Caco-2 (cell line): ENCODE measurements at regions of chr2 and their contacts with region 1.

Region 1: DNA sequence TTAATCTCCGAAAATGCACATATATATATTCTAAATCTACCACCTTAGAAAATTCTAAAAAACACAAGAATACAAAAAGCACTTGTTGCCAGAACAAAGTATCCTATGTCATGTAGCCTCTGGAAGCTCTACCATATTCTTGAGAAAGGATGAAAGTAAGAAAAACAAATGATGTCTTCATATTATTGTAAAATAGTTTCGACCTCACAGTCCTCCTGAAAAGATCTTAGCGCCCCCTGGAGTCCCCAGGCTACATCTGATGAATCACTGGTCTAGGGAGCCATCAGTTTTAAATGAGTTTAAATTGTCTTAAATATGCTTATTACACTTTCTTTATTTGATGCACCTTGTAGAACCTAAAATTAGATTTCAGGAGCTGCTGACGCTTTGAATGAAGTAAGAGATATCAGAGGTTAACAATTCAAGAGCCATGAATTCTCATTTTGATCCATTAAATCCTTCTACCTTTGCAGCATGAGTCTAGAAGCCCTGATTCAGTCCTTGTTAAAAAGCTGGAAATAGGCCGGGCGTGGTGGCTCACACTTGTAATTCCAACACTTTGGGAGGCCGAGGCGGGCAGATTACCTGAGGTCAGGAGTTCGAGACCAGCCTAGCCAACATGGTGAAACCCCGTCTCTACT is 138.8 kb downstream of the MCFD2 start:
- DNase-seq: peak; percentile 54 to 72
- H3K4me3 ChIP-seq: no peak overlapping the region
- H3K4me3 Mint-ChIP-seq: no peak overlapping the region
- H3K27ac Mint-ChIP-seq: no peak overlapping the region
- H3K4me1 ChIP-seq: no peaks in the 10 kb centered on the region
- H3K4me1 Mint-ChIP-seq: no peaks in the 10 kb centered on the region
- H3K27me3 ChIP-seq: no peaks in the 10 kb centered on the region
- H3K27me3 Mint-ChIP-seq: no peaks in the 10 kb centered on the region
- CTCF ChIP-seq: peak; percentile 57 to 89

Region 2: GRCh38 chr2:46632349-46632748 is 144.5 kb before region 1 on chr2:
- CTCF ChIA-PET with region 1: no interaction called
- POLR2A ChIA-PET with region 1: no interaction called
- intact Hi-C with region 1: loop called (anchors 1 kb)
- DNase-seq: peak in 1 of 2 experiments; percentile 39
- H3K4me3 ChIP-seq: no peak overlapping the region
- H3K4me3 Mint-ChIP-seq: no peak overlapping the region
- H3K27ac Mint-ChIP-seq: no peak overlapping the region
- H3K4me1 ChIP-seq: no peaks in the 10 kb centered on the region
- H3K4me1 Mint-ChIP-seq: no peaks in the 10 kb centered on the region
- H3K27me3 ChIP-seq: no peaks in the 10 kb centered on the region
- H3K27me3 Mint-ChIP-seq: no peaks in the 10 kb centered on the region
- CTCF ChIP-seq: peak; percentile 35 to 41

Region 3: GRCh38 chr2:46749042-46749531 is 27.7 kb before region 1 on chr2:
- CTCF ChIA-PET with region 1: no interaction called
- POLR2A ChIA-PET with region 1: no interaction called
- intact Hi-C with region 1: no loop called
- DNase-seq: no peak
- H3K4me3 ChIP-seq: no peak overlapping the region
- H3K4me3 Mint-ChIP-seq: no peak overlapping the region
- H3K27ac Mint-ChIP-seq: no peak overlapping the region
- H3K4me1 ChIP-seq: peaks cover 9% of the 10 kb centered on the region
- H3K4me1 Mint-ChIP-seq: peaks cover 19% of the 10 kb centered on the region
- H3K27me3 ChIP-seq: no peaks in the 10 kb centered on the region
- H3K27me3 Mint-ChIP-seq: no peaks in the 10 kb centered on the region
- CTCF ChIP-seq: no peak